ENCODE measurements at regions of chr15 and their contacts with region 1.

Region 1: DNA sequence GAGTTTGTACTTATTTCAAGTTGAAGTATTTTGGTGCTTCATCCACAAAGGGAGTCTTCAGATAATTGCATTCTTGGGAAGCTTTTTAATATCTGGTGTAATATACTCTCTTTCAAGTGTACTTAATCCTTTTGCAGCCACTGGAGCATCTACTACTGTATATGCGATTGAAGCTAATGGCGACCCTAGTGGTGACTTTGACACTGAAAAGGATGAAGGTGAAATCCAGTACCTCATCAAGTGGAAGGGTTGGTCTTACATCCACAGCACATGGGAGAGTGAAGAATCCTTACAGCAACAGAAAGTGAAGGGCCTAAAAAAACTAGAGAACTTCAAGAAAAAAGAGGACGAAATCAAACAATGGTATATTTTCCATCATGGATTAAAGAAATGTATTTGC is 42.6 kb downstream of the CHD2 start:
- H3K4me3 Mint-ChIP-seq: no peak overlapping the region
- H3K27ac Mint-ChIP-seq: no peak overlapping the region
- H3K4me1 Mint-ChIP-seq: peaks cover 12% of the 10 kb centered on the region
- H3K27me3 Mint-ChIP-seq: no peaks in the 10 kb centered on the region

Region 2: GRCh38 chr15:92981333-92981732 is 38.6 kb after region 1 on chr15:
- intact Hi-C with region 1: loop called (anchors 5 kb)
- H3K4me3 Mint-ChIP-seq: no peak overlapping the region
- H3K27ac Mint-ChIP-seq: no peak overlapping the region
- H3K4me1 Mint-ChIP-seq: peaks cover 8% of the 10 kb centered on the region
- H3K27me3 Mint-ChIP-seq: no peaks in the 10 kb centered on the region

Region 3: DNA sequence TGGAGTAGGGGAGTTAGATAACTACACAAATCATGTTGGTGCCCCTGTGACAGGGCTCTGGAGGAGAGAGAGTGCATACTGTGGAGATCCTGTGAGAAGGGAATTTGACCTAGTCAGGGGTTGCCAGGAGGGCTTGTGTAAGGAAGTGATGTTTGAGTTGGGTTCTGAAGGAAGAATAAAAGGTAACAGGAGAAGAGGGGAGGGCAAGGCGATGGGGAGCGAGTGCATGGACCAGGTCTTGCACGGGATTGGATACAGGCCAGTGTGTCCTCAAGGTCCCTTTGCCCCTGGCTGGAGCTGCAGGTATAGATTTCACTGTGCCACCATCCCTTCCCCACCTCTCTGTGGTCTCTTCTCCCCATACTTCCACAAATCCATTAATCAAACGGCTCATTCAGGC is 62.4 kb after region 1 on chr15:
- intact Hi-C with region 1: loop called (anchors 5 kb)
- H3K4me3 Mint-ChIP-seq: no peak overlapping the region
- H3K27ac Mint-ChIP-seq: no peak overlapping the region
- H3K4me1 Mint-ChIP-seq: no peaks in the 10 kb centered on the region
- H3K27me3 Mint-ChIP-seq: no peaks in the 10 kb centered on the region